ENCODE measurements at regions of chr15 and their contacts with region 1.

Region 1: DNA sequence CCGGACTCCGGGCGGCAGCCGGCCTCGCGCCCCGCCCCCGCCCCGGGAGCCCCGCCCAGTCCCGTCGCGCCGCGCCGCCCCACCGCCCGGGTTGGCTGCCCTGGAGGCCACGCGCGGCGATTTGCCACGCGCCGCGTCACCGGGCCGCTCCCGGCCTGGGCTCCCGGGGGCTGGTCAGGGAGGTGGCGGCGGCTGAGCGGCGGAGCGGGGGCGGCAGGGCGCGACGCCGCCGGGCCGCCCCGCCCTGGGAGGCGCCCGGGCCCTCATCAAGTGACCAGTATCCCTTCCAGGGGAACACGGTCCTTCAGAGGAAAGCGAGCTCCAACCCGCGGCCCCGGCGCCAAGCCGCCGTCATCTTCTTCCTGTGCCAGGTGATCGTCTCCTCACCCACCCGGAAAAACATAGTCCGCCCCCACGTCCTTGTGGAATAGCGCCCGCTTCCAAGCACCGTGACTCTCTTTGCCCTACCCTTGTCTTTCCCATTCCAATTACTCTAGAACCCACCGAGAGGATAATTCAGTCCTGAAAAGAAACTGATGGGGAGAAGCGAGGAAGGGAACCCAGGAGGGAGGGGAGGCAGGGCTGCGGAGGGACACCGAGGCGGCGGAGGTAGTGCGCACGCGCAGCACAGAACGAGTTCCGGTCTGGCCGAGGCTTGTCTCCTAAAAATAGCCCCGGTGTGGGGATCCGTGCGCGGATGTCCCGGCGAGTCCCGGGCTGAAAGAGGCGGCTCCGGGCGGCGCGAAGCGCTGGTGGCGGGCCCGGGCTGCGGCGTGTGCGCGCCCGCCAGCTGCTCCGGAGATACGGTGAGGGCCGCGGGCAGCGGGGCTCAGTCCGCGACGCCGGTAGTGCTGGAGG is at the start of gene MEF2A:
- DNase-seq: peak; percentile 95
- H3K4me3 ChIP-seq: peak within 1 kb of the TSS; percentile 66 to 91 (median 89)
- H3K27ac ChIP-seq: peak within 1 kb of the TSS; percentile 92 to 99 (median 98)
- H3K4me1 ChIP-seq: peaks cover 7 to 35% (median 22%) of the 10 kb centered on the region in 4 donors
- H3K27me3 ChIP-seq: no peaks in the 10 kb centered on the region
- CTCF ChIP-seq: peak in 1 of 5 experiments; percentile 30
- EP300 ChIP-seq: no peak
- POLR2A ChIP-seq: peak; percentile 91
- total RNA-seq, gene MEF2A: 37.4 to 62.5 (median 51.8) TPM

Region 2: GRCh38 chr15:99250494-99251435 is 314.8 kb before region 1 on chr15:
- in situ Hi-C with region 1: loop called in 1 of 4 experiments (anchors 25 kb)
- intact Hi-C with region 1: no loop called
- DNase-seq: peak; percentile 99
- H3K4me3 ChIP-seq: peak overlapping the region; percentile 26 to 88 (median 74)
- H3K27ac ChIP-seq: peak overlapping the region; percentile 92 to 95 (median 94)
- H3K4me1 ChIP-seq: peaks cover 9 to 61% (median 39%) of the 10 kb centered on the region in 4 donors
- H3K27me3 ChIP-seq: no peaks in the 10 kb centered on the region
- CTCF ChIP-seq: no peak
- EP300 ChIP-seq: no peak
- POLR2A ChIP-seq: peak; percentile 95

Region 3: GRCh38 chr15:99631255-99631654 is 65.7 kb after region 1 on chr15:
- in situ Hi-C with region 1: no loop called
- intact Hi-C with region 1: no loop called
- DNase-seq: peak; percentile 20
- H3K4me3 ChIP-seq: no peak overlapping the region
- H3K27ac ChIP-seq: peak overlapping the region; percentile 23 to 63 (median 59)
- H3K4me1 ChIP-seq: peaks cover 0 to 20% (median 7%) of the 10 kb centered on the region in 4 donors
- H3K27me3 ChIP-seq: no peaks in the 10 kb centered on the region
- CTCF ChIP-seq: no peak
- EP300 ChIP-seq: no peak
- POLR2A ChIP-seq: no peak

Region 4: DNA sequence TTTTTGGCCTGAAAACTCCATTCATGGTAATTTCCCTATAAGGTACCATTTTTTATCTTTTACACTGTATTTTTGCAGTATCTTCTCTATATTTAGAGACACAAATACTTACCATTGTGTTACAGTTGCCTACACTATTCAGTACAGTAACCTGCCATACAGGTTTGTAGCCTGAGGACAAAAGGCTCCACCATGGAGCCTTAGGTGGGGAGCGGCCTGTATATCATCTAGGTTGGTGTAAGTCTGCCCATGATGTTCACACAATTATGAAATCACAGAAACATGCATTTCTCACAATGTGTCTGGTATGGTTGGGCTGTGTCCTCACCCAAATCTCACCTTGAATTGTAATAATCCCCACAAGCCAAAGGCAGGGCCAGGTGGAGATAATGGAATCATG is 211.6 kb after region 1 on chr15:
- in situ Hi-C with region 1: no loop called
- intact Hi-C with region 1: no loop called
- DNase-seq: no peak
- H3K4me3 ChIP-seq: no peak overlapping the region
- H3K27ac ChIP-seq: no peak overlapping the region
- H3K4me1 ChIP-seq: no peaks in the 10 kb centered on the region
- H3K27me3 ChIP-seq: no peaks in the 10 kb centered on the region
- CTCF ChIP-seq: no peak
- EP300 ChIP-seq: no peak
- POLR2A ChIP-seq: no peak

Measured in transverse colon (tissue), 4 donors.